Heart right ventricle (tissue), 16 donors: ENCODE measurements at regions of chr3 and their contacts with region 1.

Region 1: GRCh38 chr3:51391075-51391567 is at the start of gene RBM15B:
- DNase-seq: peak; percentile 97 to 98
- ATAC-seq: peak; percentile 94 to 98 (median 97)
- H3K4me3 ChIP-seq: peak within 1 kb of the TSS; percentile 36 to 76 (median 68)
- H3K27ac ChIP-seq: peak within 1 kb of the TSS; percentile 61 to 97 (median 90)
- H3K4me1 ChIP-seq: peaks cover 33 to 91% (median 85%) of the 10 kb centered on the region in 9 donors
- H3K27me3 ChIP-seq: no peaks in the 10 kb centered on the region
- CTCF ChIP-seq: peak in 7 of 9 donors; percentile 90 to 99 (median 92)
- total RNA-seq, gene RBM15B: 11.3 to 17.1 (median 13.7) TPM

Region 2: DNA sequence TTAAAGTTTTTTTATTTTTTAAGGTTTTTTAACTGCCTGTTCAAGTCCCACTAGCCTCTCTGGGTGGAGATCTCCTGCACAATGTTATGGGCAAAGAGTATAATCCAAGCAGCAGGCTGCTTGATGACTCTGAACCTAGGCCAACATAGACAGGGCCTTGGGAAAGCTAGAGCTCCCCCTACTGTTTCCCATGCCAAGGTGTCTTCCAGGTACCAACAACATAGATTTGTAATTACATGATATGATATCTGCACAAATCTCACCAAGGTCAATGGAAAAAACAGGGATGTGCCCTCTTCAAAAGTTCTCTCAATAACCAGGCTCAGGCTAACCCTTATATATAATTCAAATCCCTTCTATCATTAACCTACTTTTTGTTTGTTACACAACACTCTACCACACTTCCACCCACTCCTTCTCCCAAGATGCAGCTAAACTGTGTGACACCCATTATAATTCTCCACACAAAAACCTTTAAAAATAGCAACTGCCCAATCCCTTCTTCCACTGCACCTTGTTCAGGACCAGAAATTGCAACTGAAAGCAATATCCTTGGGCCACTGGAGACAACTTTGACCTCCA is 43.7 kb after region 1 on chr3:
- intact Hi-C with region 1: loop called in 2 of 10 experiments (anchors 2 to 5 kb)
- DNase-seq: peak in 1 of 2 donors; percentile 37
- ATAC-seq: peak in 7 of 8 donors; percentile 55 to 81 (median 70)
- H3K4me3 ChIP-seq: no peak overlapping the region
- H3K27ac ChIP-seq: no peak overlapping the region
- H3K4me1 ChIP-seq: peaks cover 0 to 6% (median 0%) of the 10 kb centered on the region in 9 donors
- H3K27me3 ChIP-seq: no peaks in the 10 kb centered on the region
- CTCF ChIP-seq: peak; percentile 46 to 82 (median 64)

Region 3: DNA sequence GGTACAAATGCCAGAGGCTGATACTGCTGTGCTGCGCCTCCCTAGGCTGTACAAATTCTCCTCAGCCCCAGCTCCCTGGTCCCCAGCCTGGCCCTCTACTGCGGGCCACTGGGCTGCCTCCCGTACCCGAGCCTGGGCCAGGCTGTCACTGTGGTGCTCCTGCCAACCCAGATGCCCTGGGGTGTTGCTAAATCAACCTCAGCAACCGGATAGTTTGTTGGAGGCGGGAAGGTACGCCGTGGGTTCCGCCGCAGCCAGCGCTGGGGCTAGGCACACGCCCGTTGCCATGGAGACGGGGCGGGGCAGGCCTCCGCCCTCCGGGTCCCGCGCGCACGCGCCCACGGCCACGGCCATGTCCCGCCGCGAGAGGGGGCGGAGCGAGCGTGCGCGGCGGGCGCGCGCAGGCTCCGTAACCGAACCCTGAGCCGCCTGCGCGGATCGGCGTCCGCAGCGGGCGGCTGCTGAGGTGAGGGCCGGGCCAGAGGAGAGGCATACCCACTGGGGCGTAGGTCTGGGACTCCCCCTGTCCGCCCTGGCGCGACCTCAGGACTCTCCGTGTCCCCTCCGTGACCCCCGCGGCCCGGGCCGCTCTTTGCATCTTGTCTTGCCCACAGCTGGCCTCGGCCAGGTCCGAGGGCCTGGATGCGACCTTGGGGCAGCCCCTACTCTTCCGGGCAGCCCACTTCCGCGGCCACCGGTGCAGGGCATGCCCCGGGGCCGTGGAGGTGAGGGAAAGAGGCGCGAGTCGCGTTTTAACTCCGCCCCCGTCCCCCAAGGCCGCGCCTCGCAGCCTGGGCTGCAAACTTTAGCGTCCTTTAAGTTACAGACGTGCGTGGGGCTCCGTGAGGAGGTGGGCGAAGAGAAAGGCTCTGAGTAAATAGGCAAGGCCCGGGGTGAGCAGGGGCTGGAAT is 280.0 kb after region 1 on chr3 and contains the start of gene TEX264:
- intact Hi-C with region 1: loop called in 5 of 10 experiments (anchors 5 to 10 kb)
- DNase-seq: peak; percentile 87 to 95
- ATAC-seq: peak; percentile 90 to 96 (median 94)
- H3K4me3 ChIP-seq: peak within 1 kb of the TSS; percentile 72 to 98 (median 88)
- H3K27ac ChIP-seq: peak within 1 kb of the TSS; percentile 90 to 99 (median 97)
- H3K4me1 ChIP-seq: peaks cover 7 to 65% (median 40%) of the 10 kb centered on the region in 9 donors
- H3K27me3 ChIP-seq: no peaks in the 10 kb centered on the region
- CTCF ChIP-seq: peak in 1 of 9 donors; percentile 10
- total RNA-seq, gene TEX264: 28.4 to 50.1 (median 33.4) TPM

Region 4: DNA sequence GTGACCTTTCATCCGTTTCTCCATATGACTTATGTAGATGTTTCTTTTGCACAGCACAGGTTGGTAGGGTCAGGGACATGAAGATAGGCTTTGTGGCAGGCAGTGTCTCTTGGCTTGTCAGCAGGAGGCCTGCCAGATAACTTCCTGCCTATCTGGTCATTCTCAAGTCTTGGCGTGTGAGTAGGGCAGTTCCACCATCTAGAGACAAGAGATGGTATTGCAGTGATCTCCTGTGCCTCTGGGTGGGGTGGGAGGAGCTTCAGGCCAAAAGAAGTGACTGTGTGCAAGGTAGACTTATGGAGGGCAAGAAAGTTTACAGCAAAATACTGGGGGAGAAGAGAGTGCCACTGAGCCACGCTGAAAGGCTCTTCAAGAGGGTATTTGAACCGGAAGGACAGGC is 291.0 kb after region 1 on chr3:
- intact Hi-C with region 1: loop called in 8 of 10 experiments (anchors 10 kb)
- DNase-seq: peak in 1 of 2 donors; percentile 81
- ATAC-seq: peak; percentile 45 to 81 (median 67)
- H3K4me3 ChIP-seq: peak overlapping the region in 1 of 10 donors; percentile 20
- H3K27ac ChIP-seq: peak overlapping the region in 9 of 10 donors; percentile 24 to 96 (median 93)
- H3K4me1 ChIP-seq: peaks cover 51 to 98% (median 88%) of the 10 kb centered on the region in 9 donors
- H3K27me3 ChIP-seq: no peaks in the 10 kb centered on the region
- CTCF ChIP-seq: peak; percentile 61 to 85 (median 83)